Mammary epithelial cell (primary cell): ENCODE measurements at regions of chr7 and their contacts with region 1.

Region 1: GRCh38 chr7:55018361-55019190 is at the start of gene EGFR:
- DNase-seq: peak; percentile 80
- H3K4me3 ChIP-seq: peak within 1 kb of the TSS; percentile 62 to 83 (median 67)
- H3K27ac ChIP-seq: peak within 1 kb of the TSS; percentile 85
- H3K4me1 ChIP-seq: peaks cover 34% of the 10 kb centered on the region
- H3K27me3 ChIP-seq: no peaks in the 10 kb centered on the region
- CTCF ChIP-seq: no peak
- total RNA-seq, gene EGFR: 304 to 534 TPM

Region 2: DNA sequence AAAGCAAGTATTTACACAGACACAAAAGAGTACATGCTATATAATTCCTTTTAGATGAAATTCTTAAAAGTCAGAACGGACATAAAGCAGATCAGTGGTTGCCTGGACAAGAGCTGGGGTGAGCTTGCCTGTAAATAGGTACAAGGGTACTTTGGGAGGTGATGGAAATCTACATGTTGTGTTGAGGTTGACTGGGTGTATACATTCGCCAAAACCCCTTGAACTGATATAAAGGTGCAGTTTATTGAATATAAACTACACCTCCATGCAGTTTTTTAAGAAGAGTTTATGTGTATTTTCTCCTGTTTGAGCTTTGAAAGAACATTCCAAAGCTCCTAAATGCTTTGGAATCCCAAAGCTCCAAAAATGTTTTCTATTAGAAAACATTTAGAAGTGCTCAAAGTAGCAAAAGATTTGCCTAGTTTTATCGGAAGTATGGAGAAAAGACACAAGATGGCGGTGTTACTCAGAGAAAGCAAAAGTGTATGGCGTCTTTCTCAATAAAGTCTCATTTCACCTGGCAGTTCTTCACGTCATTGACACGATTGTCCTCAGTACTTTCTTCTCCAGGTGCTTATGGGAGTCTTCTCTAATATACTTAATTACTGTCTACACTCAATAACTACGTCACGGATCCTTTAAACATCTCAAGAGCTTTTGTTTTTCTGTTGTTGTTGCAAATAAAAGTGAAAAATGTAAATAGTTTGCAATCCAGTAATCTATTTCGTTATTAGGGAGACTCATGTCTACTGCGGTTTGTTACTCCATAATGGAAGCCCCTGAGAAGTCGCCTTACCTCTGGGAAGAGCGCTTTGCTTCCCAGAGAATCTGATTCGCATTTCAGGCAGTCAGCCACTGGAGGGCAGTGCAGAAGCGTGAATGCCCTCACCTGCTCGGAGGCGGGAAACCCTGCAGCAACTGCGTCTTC is 244.8 kb before region 1 on chr7:
- CTCF ChIA-PET with region 1: no interaction called
- dilution Hi-C with region 1: no loop called
- in situ Hi-C with region 1: no loop called
- intact Hi-C with region 1: no loop called
- DNase-seq: peak; percentile 78
- H3K4me3 ChIP-seq: peak overlapping the region; percentile 9 to 33 (median 14)
- H3K27ac ChIP-seq: peak overlapping the region; percentile 50
- H3K4me1 ChIP-seq: peaks cover 16% of the 10 kb centered on the region
- H3K27me3 ChIP-seq: no peaks in the 10 kb centered on the region
- CTCF ChIP-seq: peak; percentile 90 to 94

Region 3: DNA sequence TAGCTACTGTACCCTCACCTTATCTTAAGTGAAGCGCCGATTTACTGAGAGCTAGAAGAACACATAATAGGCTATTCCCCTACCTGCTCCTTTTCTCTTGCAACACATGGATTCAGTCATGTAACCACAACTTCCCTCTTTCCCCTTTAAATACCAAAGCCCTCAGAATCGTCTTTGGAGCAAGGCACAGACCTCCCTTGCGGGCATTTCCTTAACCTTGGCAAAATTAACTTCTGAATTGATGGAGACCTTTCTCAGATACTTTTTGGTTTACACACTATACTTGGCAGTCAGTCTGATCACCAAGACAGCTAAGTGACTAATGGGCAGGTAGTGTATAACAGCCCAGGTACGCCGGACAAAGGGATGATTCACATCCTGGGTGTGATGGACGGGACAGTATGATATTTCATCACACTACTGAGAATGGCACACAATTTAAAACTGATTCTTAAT is 186.9 kb before region 1 on chr7:
- CTCF ChIA-PET with region 1: no interaction called
- dilution Hi-C with region 1: loop called (anchors 5 kb)
- in situ Hi-C with region 1: no loop called
- intact Hi-C with region 1: loop called (anchors 1 kb)
- DNase-seq: peak; percentile 99
- H3K4me3 ChIP-seq: peak overlapping the region in 2 of 3 experiments; percentile 23 to 32
- H3K27ac ChIP-seq: peak overlapping the region; percentile 94
- H3K4me1 ChIP-seq: peaks cover 28% of the 10 kb centered on the region
- H3K27me3 ChIP-seq: no peaks in the 10 kb centered on the region
- CTCF ChIP-seq: no peak

Region 4: GRCh38 chr7:54946749-54947148 is 71.8 kb before region 1 on chr7:
- CTCF ChIA-PET with region 1: no interaction called
- dilution Hi-C with region 1: no loop called
- in situ Hi-C with region 1: no loop called
- intact Hi-C with region 1: loop called (anchors 1 kb)
- DNase-seq: peak; percentile 91
- H3K4me3 ChIP-seq: no peak overlapping the region
- H3K27ac ChIP-seq: peak overlapping the region; percentile 99
- H3K4me1 ChIP-seq: peaks cover 24% of the 10 kb centered on the region
- H3K27me3 ChIP-seq: no peaks in the 10 kb centered on the region
- CTCF ChIP-seq: no peak

Region 5: DNA sequence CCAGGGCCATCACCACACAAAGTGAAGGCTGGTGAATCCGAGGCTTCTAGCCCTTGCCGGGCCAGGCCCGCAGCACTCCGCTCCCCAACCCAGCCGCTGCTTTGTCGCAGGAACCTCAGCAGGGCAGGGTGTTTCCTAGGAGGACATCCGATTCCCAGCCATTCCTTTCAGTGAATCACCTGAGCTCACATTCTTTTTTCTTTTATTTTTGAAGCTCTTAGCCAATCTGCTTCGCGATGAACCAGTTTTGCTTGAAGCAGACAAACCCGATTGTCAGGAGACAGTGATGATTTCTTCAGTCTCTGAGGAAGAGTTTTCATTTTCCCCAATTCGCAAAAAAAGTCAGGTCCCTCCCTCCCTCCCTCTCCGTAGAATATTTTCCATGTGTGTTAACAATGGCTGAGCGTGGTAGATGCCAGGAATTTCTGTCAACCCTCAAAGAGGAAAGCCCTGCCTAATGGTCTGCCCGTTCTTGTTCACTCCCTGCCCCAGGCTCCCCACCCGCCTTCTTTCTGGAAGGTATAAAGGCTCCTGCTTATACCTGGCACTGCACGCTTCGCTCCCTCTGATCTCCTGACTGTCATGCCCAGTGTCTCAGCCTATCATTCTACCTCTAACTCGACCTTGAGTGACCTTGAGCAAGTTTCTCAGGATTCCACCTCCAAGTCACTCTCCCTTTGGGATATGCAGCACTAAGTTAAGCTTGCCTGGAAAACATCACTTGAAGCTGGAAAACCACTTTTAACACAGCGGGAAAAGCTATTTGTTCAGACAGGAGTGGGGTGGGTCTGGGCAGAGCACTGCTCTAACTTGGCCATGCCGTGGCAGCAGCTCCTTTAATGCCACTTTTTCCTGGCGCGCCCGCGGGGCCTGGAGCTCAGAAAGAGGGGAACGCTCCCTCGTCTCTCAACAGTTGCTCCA is 35.3 kb after region 1 on chr7:
- CTCF ChIA-PET with region 1: no interaction called
- dilution Hi-C with region 1: no loop called
- in situ Hi-C with region 1: no loop called
- intact Hi-C with region 1: no loop called
- DNase-seq: peak; percentile 82
- H3K4me3 ChIP-seq: peak overlapping the region in 1 of 3 experiments; percentile 28
- H3K27ac ChIP-seq: peak overlapping the region; percentile 96
- H3K4me1 ChIP-seq: peaks cover 74% of the 10 kb centered on the region
- H3K27me3 ChIP-seq: no peaks in the 10 kb centered on the region
- CTCF ChIP-seq: peak in 1 of 2 donors; percentile 37

Region 6: DNA sequence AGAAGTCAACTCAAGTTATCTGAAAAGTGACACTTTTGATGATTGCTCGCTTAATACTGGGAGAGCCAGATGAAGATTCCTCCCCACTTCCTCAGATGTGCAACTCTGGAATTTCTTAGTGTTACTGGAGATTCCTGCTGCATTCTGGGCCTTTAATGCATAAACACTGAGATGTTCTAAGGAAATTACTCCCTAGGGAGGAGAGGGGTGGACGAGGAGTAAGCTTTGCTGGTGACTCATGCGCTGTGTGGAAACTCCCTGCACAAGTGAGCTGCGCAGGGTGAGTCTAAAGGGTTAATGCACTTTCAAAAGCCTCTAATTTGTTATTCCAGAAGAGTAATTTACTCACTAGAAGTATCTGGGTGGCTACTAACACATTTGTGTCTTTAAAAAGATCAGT is 46.5 kb after region 1 on chr7:
- CTCF ChIA-PET with region 1: no interaction called
- dilution Hi-C with region 1: loop called (anchors 5 kb)
- in situ Hi-C with region 1: no loop called
- intact Hi-C with region 1: loop called (anchors 2 kb)
- DNase-seq: peak; percentile 89
- H3K4me3 ChIP-seq: no peak overlapping the region
- H3K27ac ChIP-seq: peak overlapping the region; percentile 97
- H3K4me1 ChIP-seq: peaks cover 71% of the 10 kb centered on the region
- H3K27me3 ChIP-seq: no peaks in the 10 kb centered on the region
- CTCF ChIP-seq: no peak

Region 7: GRCh38 chr7:55349121-55349520 is 330.5 kb after region 1 on chr7:
- CTCF ChIA-PET with region 1: no interaction called
- dilution Hi-C with region 1: no loop called
- in situ Hi-C with region 1: no loop called
- intact Hi-C with region 1: no loop called
- DNase-seq: peak; percentile 17
- H3K4me3 ChIP-seq: no peak overlapping the region
- H3K27ac ChIP-seq: no peak overlapping the region
- H3K4me1 ChIP-seq: peaks cover 8% of the 10 kb centered on the region
- H3K27me3 ChIP-seq: peaks cover 2% of the 10 kb centered on the region
- CTCF ChIP-seq: no peak

Region 8: GRCh38 chr7:55365675-55366460 is 347.3 kb after region 1 on chr7:
- CTCF ChIA-PET with region 1: no interaction called
- dilution Hi-C with region 1: no loop called
- in situ Hi-C with region 1: no loop called
- intact Hi-C with region 1: no loop called
- DNase-seq: peak; percentile 96
- H3K4me3 ChIP-seq: peak overlapping the region; percentile 65 to 97 (median 77)
- H3K27ac ChIP-seq: peak overlapping the region; percentile 94
- H3K4me1 ChIP-seq: peaks cover 17% of the 10 kb centered on the region
- H3K27me3 ChIP-seq: no peaks in the 10 kb centered on the region
- CTCF ChIP-seq: peak in 1 of 2 donors; percentile 44